ENCODE measurements at regions of chr14 and their contacts with region 1.

Region 1: DNA sequence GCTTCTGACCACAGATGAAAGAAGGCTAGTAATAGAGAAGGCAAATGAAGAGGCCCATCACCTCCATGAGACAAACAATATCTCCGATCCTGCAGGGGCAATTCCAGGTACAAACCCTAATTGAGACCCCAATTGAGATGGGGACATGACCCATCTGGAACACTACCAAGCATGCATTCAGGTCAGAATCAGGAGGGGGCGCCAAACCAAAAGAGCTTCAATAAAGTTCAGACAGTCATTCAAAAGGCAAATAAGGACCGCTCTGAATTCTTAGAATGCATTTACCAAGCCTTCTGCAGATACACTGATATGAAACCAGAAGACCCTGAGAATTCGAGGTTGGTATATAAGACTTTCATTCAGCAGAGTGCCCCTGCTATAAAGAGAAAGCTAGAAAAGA is 10.2 kb upstream of the EDDM3B start:
- DNase-seq: peak in 1 of 2 donors; percentile 34
- ATAC-seq: peak in 1 of 8 donors; percentile 61
- H3K4me3 ChIP-seq: no peak overlapping the region
- H3K27ac ChIP-seq: no peak overlapping the region
- H3K4me1 ChIP-seq: peaks cover 0 to 9% (median 0%) of the 10 kb centered on the region in 9 donors
- H3K27me3 ChIP-seq: no peaks in the 10 kb centered on the region
- CTCF ChIP-seq: peak in 7 of 9 donors; percentile 43 to 67 (median 48)

Region 2: GRCh38 chr14:20697273-20698017 is 60.5 kb before region 1 on chr14:
- intact Hi-C with region 1: loop called in 2 of 10 experiments (anchors 5 to 10 kb)
- DNase-seq: peak; percentile 37 to 48
- ATAC-seq: peak; percentile 69 to 87 (median 76)
- H3K4me3 ChIP-seq: no peak overlapping the region
- H3K27ac ChIP-seq: no peak overlapping the region
- H3K4me1 ChIP-seq: peaks cover 0 to 10% (median 0%) of the 10 kb centered on the region in 9 donors
- H3K27me3 ChIP-seq: no peaks in the 10 kb centered on the region
- CTCF ChIP-seq: peak; percentile 63 to 87 (median 82)

Region 3: GRCh38 chr14:20707622-20708021 is 50.3 kb before region 1 on chr14:
- intact Hi-C with region 1: loop called in 1 of 10 experiments (anchors 10 kb)
- DNase-seq: no peak
- ATAC-seq: peak in 2 of 8 donors; percentile 46 to 52
- H3K4me3 ChIP-seq: no peak overlapping the region
- H3K27ac ChIP-seq: peak overlapping the region in 8 of 10 donors; percentile 25 to 77 (median 48)
- H3K4me1 ChIP-seq: peaks cover 0 to 13% (median 5%) of the 10 kb centered on the region in 9 donors
- H3K27me3 ChIP-seq: no peaks in the 10 kb centered on the region
- CTCF ChIP-seq: no peak

Region 4: DNA sequence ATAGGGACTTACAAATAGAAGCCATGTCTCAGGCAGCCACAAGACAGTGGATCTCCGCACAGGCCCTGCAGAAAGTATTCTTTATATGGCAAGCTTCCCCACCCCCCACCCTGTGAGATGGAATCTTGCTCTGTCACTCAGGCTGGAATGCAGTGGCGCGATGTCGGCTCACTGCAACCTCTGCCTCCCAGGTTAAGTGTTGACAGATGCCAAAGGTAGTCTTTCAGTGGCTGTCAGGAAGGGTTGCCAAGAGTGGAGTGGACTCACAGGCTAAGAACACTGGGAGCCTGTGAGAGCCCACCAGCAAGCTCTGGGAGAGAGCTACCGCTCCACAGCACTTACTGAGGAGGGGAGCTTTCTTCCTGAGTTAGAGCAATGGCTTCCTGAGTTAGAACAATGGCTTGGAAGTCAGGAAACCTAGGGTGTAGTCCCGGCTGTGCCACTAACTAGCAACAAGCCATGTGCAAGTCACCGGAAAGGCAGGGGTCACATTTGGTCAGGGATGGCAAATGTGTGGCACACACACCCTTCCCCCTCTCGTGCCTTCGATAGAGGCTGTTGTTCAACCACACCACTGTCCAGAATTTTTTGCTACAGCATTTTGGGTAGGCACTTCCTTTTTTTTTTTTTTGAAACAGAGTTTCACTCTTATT is 42.1 kb after region 1 on chr14:
- intact Hi-C with region 1: loop called in 2 of 10 experiments (anchors 5 kb)
- DNase-seq: peak; percentile 44 to 59
- ATAC-seq: peak; percentile 62 to 77 (median 76)
- H3K4me3 ChIP-seq: peak overlapping the region; percentile 43 to 66 (median 60)
- H3K27ac ChIP-seq: peak overlapping the region; percentile 56 to 91 (median 83)
- H3K4me1 ChIP-seq: peaks cover 3 to 68% (median 28%) of the 10 kb centered on the region in 9 donors
- H3K27me3 ChIP-seq: no peaks in the 10 kb centered on the region
- CTCF ChIP-seq: no peak

Region 5: DNA sequence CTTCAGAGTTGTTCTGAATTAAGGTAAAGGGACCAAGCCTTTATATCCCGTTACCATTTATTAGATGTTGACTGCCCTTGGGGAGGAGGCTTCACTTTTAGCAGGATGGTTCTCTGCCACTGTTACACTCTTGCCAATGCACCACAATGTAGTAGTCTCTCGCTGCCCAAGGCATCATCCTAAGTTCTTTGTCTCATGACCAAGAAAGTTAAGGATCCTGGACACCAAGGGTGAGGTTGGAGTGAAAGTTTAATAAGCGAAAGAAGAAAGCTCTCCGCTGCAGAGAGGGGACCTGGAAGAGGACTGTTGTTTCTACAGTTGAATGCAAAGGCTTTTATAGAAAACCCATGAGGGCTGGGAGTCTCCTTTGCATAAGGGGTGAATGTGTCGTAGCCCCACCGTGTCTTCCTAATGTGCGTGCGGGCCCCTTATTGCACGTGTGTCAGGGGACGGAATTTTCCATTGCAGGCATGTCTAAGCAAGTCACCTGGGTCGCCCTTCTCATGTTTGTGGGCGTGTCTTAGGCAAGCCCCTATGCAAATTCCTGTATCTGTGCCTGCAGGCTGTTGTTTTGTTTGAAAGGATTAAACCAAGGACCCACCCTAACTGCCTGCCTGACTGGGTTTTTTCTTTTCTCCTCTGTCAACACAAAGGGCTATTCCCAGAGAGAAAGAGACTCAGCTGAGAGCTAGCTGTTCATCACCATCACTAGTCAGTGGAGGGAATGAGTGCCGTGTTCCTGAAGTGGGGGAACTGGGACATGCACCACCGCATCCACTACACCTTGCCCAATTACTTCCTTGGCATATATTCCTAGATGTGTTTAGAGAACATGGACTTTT is 62.3 kb after region 1 on chr14:
- intact Hi-C with region 1: no loop called
- DNase-seq: no peak
- ATAC-seq: no peak
- H3K4me3 ChIP-seq: no peak overlapping the region
- H3K27ac ChIP-seq: peak overlapping the region in 1 of 10 donors; percentile 81
- H3K4me1 ChIP-seq: peaks cover 0 to 21% (median 0%) of the 10 kb centered on the region in 9 donors
- H3K27me3 ChIP-seq: no peaks in the 10 kb centered on the region
- CTCF ChIP-seq: no peak

Region 6: DNA sequence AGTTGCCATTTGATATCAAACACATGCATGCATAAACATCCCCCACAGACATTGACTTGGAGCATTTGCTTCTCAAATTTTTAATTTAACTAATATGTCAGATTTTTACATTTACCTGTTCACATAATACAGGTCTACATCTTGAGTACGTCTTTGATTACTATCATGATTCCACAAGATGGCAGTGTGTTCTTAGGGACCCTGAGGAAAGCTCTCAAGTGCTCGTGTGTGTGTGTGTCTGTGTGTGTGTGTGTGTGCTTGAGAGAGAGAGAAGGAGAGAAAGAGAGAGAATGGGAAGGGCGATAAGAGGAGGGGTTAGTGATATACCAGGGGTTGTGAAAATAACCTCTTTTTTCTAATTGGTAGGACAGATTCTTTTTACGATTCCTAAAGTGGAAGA is 1082.8 kb after region 1 on chr14:
- intact Hi-C with region 1: loop called in 1 of 10 experiments (anchors 5 kb)
- DNase-seq: no peak
- ATAC-seq: no peak
- H3K4me3 ChIP-seq: no peak overlapping the region
- H3K27ac ChIP-seq: no peak overlapping the region
- H3K4me1 ChIP-seq: no peaks in the 10 kb centered on the region
- H3K27me3 ChIP-seq: peaks cover 0 to 4% (median 0%) of the 10 kb centered on the region in 7 donors
- CTCF ChIP-seq: no peak

Measured in heart right ventricle (tissue), 16 donors.